Activated CD8-positive, alpha-beta memory T cell treated with anti-CD3 and anti-CD28 coated beads, Interleukin-2, amount 10 ng/mL, durations not matched to agents 7 days and 5 days (primary cell): ENCODE measurements at regions of chr9 and their contacts with region 1.

Region 1: GRCh38 chr9:124410321-124410913 is 4.8 kb downstream of the PSMB7 start:
- DNase-seq: no peak
- ATAC-seq: no peak
- H3K4me3 Mint-ChIP-seq: no peak overlapping the region
- H3K27ac Mint-ChIP-seq: no peak overlapping the region
- H3K4me1 Mint-ChIP-seq: peaks cover 34% of the 10 kb centered on the region
- H3K27me3 Mint-ChIP-seq: no peaks in the 10 kb centered on the region

Region 2: DNA sequence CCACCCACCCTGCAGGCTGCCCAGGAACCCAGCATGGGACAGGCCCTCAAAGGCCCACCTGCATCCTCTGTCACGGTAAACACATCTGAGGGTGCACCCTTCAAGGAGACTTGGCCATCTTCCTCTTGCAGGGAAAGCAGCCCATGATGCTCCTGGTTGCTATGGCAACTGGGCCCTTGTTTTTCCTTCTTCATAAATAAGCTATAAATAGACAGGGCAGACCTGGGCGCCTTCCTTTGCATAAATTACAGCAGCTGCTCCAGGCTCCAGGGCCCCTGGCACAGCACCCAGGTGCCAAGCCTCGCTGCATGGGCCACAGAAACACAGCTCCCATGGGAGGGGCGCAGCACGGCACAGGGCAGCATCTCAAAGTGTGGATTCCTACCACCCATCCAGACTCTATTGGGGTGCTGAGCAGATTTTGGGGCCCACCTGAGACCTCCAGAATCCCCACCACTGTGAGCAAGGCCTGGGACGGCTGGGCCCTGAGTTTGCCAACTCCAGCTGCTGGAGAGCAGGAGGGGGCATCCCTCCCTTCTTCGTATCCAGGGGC is 10.7 kb after region 1 on chr9:
- CTCF ChIA-PET with region 1: interaction called, 10 read pairs
- DNase-seq: no peak
- ATAC-seq: no peak
- H3K4me3 Mint-ChIP-seq: no peak overlapping the region
- H3K27ac Mint-ChIP-seq: no peak overlapping the region
- H3K4me1 Mint-ChIP-seq: peaks cover 18% of the 10 kb centered on the region
- H3K27me3 Mint-ChIP-seq: peaks cover 6% of the 10 kb centered on the region

Region 3: DNA sequence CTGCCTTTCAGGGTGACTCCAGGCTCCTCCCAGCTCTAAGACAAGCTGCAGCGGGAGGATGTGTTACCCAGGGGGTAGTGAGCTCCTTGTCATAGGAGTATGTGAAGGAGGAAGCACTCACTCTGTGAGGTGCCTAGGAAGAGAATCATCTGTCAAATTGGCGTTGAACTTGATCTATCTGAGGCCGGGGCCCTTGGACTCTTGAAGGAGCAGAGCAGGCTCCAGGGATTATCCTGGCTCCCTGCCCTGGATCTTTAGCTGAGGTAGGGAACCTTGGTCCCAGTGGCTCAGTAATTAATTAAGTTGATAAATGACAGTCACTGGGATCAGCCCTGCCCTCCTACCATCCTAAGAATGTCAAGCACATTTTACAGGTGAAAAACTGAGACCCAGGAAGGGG is 55.3 kb after region 1 on chr9:
- CTCF ChIA-PET with region 1: no interaction called
- DNase-seq: no peak
- ATAC-seq: no peak
- H3K4me3 Mint-ChIP-seq: no peak overlapping the region
- H3K27ac Mint-ChIP-seq: no peak overlapping the region
- H3K4me1 Mint-ChIP-seq: no peaks in the 10 kb centered on the region
- H3K27me3 Mint-ChIP-seq: peaks cover 15% of the 10 kb centered on the region